Stomach (tissue), 19 donors: ENCODE measurements at regions of chr21 and their contacts with region 1.

Region 1: DNA sequence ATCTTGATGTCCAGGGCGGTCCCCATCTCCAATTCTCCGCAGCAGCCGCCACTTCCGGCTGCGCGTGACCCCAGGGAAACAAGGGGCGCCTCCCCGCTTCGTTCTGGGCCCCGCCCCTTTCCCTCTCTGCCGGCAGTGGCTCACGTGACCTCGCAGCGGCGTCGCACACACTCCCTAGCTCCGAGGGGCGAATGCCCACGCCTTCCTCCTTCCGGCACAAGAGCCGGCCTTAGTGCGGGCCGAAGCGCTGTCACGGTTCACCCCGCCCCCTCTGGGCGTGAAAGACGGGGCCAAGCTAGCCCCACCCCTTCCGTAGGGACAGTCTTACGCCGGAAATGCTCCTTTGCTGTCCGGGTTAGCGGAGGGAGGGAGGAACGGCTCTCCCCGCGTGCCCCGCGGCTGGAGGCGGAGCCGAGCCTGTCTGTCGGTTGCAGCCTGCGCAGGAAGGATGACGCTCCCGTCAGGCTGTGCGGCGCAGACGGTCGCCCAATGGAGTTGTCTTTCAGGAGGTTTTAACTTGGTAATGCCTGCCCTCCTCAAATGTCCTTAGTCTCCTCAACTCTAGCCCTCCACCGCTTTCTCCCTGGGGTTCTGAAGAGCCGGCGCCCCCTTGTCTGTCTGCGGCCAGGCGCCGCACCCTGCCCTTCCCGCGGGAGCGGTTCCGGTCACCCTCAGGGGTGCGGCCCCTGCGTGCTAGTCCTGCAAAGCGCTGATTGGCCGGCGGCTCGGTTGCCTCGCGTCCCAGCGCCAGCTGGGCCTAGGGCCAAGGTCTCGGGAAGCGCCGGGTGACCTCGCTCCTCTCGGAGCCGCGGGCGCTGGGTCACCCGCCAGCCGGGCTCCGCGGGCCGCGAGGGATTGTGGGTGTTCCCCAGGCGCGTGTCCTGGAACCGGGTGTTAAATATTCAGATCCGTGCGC is at the start of gene VPS26C:
- DNase-seq: peak; percentile 98 to 100
- H3K4me3 ChIP-seq: peak within 1 kb of the TSS; percentile 70 to 94 (median 83)
- H3K27ac ChIP-seq: peak within 1 kb of the TSS; percentile 96 to 99 (median 98)
- H3K4me1 ChIP-seq: peaks cover 7 to 43% (median 25%) of the 10 kb centered on the region in 4 donors
- H3K27me3 ChIP-seq: no peaks in the 10 kb centered on the region
- CTCF ChIP-seq: no peak
- EP300 ChIP-seq: peak; percentile 40
- POLR2A ChIP-seq: peak in 2 of 4 donors; percentile 36 to 58
- total RNA-seq, gene VPS26C: 21.4 to 118 (median 47.8) TPM

Region 2: GRCh38 chr21:37366482-37367316 is 99.2 kb after region 1 on chr21 and contains the start of gene DYRK1A:
- intact Hi-C with region 1: loop called (anchors 10 kb)
- DNase-seq: peak; percentile 97 to 100
- H3K4me3 ChIP-seq: peak within 1 kb of the TSS; percentile 63 to 94 (median 84)
- H3K27ac ChIP-seq: peak within 1 kb of the TSS; percentile 99 to 100 (median 99)
- H3K4me1 ChIP-seq: peaks cover 9 to 46% (median 34%) of the 10 kb centered on the region in 4 donors
- H3K27me3 ChIP-seq: no peaks in the 10 kb centered on the region
- CTCF ChIP-seq: no peak
- EP300 ChIP-seq: no peak
- POLR2A ChIP-seq: peak in 2 of 4 donors; percentile 34 to 52
- total RNA-seq, gene DYRK1A: 58.3 to 124 (median 99.4) TPM